ENCODE measurements at regions of chr1 and their contacts with region 1.

Region 1: GRCh38 chr1:164922585-164922984 is 363.6 kb downstream of the PBX1 start:
- DNase-seq: no peak
- ATAC-seq: peak; percentile 80

Region 2: GRCh38 chr1:164452549-164452948 is 470.0 kb before region 1 on chr1:
- intact Hi-C with region 1: loop called (anchors 5 kb)
- DNase-seq: no peak
- ATAC-seq: no peak

Measured in left ventricle myocardium superior (tissue), 1 donor.